Activated CD4-positive, alpha-beta T cell treated with anti-CD3 and anti-CD28 coated beads, Interleukin-2, amount 10 ng/mL, durations not matched to agents 7 days and 5 days (primary cell): ENCODE measurements at regions of chr12 and their contacts with region 1.

Region 1: DNA sequence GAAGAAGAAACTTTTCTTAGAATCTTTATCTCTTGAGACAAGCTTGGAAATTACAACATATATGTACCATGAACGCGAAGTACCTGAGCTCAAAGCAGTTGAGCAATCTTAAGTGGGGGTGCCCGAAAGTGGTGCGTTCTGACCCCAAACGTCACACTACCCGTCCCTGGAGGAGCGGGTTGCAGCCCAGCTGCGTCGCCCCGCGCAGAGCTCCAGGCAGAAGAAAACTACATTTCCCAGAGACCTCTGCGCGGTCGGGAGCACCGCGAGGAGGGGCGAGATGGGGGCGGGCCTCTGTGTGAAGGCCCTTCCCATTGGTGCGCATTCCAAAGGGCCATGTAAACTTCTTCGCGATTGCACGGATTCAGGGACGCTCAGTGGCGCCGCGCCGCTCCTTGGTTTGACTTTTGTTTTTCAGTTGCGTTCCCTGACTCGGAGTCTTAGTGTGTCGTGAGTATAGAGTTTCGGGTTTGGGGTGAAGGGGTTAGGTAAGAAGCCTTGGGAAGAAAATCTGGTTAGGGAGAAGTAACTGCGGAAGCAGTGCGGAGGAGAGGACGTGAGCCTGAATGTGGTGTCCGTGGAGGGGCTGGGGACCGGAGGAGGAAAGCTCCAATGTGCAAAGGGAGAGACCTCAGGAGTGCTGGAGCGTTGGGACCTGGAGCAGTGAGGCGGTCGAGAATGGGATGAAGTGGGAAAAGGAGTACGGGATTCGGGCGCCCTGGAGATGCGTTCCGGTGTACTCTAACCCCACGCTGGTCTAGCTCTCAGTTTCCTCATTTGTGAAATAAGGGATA is at the start of gene CCDC77:
- DNase-seq: peak; percentile 94
- H3K4me3 Mint-ChIP-seq: no peak within 1 kb of the TSS
- H3K27ac Mint-ChIP-seq: no peak within 1 kb of the TSS
- H3K4me1 Mint-ChIP-seq: peaks cover 7% of the 10 kb centered on the region
- H3K27me3 Mint-ChIP-seq: no peaks in the 10 kb centered on the region
- total RNA-seq, gene CCDC77: 14.6 TPM

Region 2: GRCh38 chr12:252636-253035 is 148.8 kb before region 1 on chr12:
- CTCF ChIA-PET with region 1: no interaction called
- POLR2A ChIA-PET with region 1: no interaction called
- DNase-seq: no peak
- H3K4me3 Mint-ChIP-seq: no peak overlapping the region
- H3K27ac Mint-ChIP-seq: no peak overlapping the region
- H3K4me1 Mint-ChIP-seq: no peaks in the 10 kb centered on the region
- H3K27me3 Mint-ChIP-seq: peaks cover 17% of the 10 kb centered on the region

Region 3: GRCh38 chr12:414859-415258 is 13.4 kb after region 1 on chr12:
- CTCF ChIA-PET with region 1: interaction called, 10 read pairs
- POLR2A ChIA-PET with region 1: no interaction called
- DNase-seq: no peak
- H3K4me3 Mint-ChIP-seq: no peak overlapping the region
- H3K27ac Mint-ChIP-seq: no peak overlapping the region
- H3K4me1 Mint-ChIP-seq: no peaks in the 10 kb centered on the region
- H3K27me3 Mint-ChIP-seq: no peaks in the 10 kb centered on the region